GM18951 (cell line): ENCODE measurements at regions of chr9 and their contacts with region 1.

Region 1: GRCh38 chr9:72292256-72292682 is 72.7 kb downstream of the ZFAND5 start:
- POLR2A ChIP-seq: no peak

Region 2: GRCh38 chr9:72592502-72593403 is 300.5 kb after region 1 on chr9:
- in situ Hi-C with region 1: loop called (anchors 5 kb)
- POLR2A ChIP-seq: no peak